Activated B cell treated with CpG ODN at 0.5 μM for 24 hours (primary cell): ENCODE measurements at regions of chr9 and their contacts with region 1.

Region 1: GRCh38 chr9:6779417-6780241 is 21.9 kb downstream of the KDM4C start:
- DNase-seq: no peak
- ATAC-seq: peak; percentile 29
- H3K4me3 Mint-ChIP-seq: peak overlapping the region; percentile 44
- H3K27ac Mint-ChIP-seq: peak overlapping the region; percentile 63
- H3K4me1 Mint-ChIP-seq: peaks cover 94% of the 10 kb centered on the region
- H3K27me3 Mint-ChIP-seq: no peaks in the 10 kb centered on the region
- CTCF ChIP-seq: no peak

Region 2: DNA sequence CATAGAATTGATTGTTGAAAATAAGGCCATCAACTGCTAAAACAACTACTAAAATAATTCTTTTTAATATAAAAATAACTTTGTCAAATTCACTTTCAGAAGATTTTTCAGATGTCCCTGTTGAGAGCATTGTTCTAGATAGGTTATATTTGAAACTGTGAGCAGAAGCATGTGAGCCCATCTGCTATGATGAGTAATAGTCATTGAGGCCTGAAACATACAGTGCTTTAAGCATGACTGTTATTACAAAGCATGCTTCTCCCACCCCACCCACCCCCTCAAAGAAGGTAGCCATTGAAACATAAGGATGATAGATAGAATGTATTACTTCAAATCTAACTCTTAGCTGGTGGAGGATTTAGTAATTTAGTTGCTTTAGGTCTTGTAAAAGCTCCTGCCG is 280.6 kb before region 1 on chr9:
- CTCF ChIA-PET with region 1: no interaction called
- POLR2A ChIA-PET with region 1: no interaction called
- intact Hi-C with region 1: no loop called
- DNase-seq: no peak
- ATAC-seq: peak; percentile 37
- H3K4me3 Mint-ChIP-seq: no peak overlapping the region
- H3K27ac Mint-ChIP-seq: no peak overlapping the region
- H3K4me1 Mint-ChIP-seq: no peaks in the 10 kb centered on the region
- H3K27me3 Mint-ChIP-seq: no peaks in the 10 kb centered on the region
- CTCF ChIP-seq: no peak

Region 3: GRCh38 chr9:6764523-6764922 is 15.1 kb before region 1 on chr9:
- CTCF ChIA-PET with region 1: interaction called, 3 read pairs
- POLR2A ChIA-PET with region 1: interaction called, 49 read pairs
- intact Hi-C with region 1: loop called (anchors 2 kb)
- DNase-seq: no peak
- ATAC-seq: no peak
- H3K4me3 Mint-ChIP-seq: peak overlapping the region; percentile 1
- H3K27ac Mint-ChIP-seq: peak overlapping the region; percentile 3
- H3K4me1 Mint-ChIP-seq: peaks cover 80% of the 10 kb centered on the region
- H3K27me3 Mint-ChIP-seq: no peaks in the 10 kb centered on the region
- CTCF ChIP-seq: no peak

Region 4: DNA sequence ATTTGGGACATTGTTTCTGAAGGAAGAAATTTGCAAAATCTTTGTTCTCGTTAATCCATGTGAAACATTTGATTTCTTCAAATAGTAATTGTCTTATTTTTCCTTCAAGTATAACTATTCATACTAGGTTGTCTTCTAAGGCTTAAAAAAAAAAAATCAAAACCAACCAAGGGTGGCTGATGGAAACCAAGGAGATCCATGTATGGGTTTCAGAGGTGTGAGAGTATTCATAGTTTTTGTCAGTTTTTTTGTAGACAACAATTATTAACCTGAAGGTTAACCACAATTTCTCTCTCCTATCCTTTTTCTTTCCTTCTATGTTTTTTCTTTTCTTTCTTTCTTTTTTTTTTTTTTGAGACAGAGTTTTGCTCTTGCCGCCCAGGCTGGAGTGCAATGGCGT is 13.6 kb after region 1 on chr9:
- CTCF ChIA-PET with region 1: no interaction called
- POLR2A ChIA-PET with region 1: interaction called, 3 read pairs
- intact Hi-C with region 1: loop called (anchors 2 kb)
- DNase-seq: no peak
- ATAC-seq: no peak
- H3K4me3 Mint-ChIP-seq: no peak overlapping the region
- H3K27ac Mint-ChIP-seq: no peak overlapping the region
- H3K4me1 Mint-ChIP-seq: peaks cover 22% of the 10 kb centered on the region
- H3K27me3 Mint-ChIP-seq: no peaks in the 10 kb centered on the region
- CTCF ChIP-seq: no peak

Region 5: DNA sequence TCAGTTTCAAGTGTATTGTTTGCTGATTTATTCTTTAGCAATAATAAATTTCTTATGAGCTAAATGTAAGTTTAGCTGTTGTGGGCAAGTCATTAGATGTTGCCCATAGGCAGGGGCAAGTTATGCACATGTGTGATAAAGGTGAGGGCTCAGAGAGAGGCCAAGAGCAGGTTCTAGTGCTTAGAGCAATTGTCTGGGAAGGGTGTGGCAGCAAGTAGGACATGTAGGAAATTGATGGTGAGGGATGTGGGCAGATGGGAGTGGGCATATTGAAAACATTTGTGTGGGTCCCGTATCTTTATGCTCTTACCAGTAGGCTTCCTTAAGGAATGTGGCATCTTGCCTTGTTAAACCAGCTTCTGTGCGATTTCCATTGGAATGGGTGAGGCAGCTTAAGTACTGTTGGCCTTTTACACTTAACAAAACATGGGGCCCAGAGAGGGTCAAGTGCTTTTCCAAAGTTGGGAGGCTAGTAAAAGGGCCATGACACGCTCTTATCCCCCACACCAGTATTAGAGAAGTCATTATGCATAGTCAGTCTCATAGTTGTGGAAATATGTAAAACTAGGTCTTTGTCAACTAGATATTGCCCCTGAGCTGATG is 38.8 kb after region 1 on chr9:
- CTCF ChIA-PET with region 1: no interaction called
- POLR2A ChIA-PET with region 1: no interaction called
- intact Hi-C with region 1: loop called (anchors 5 kb)
- DNase-seq: no peak
- ATAC-seq: no peak
- H3K4me3 Mint-ChIP-seq: no peak overlapping the region
- H3K27ac Mint-ChIP-seq: peak overlapping the region; percentile 39
- H3K4me1 Mint-ChIP-seq: peaks cover 49% of the 10 kb centered on the region
- H3K27me3 Mint-ChIP-seq: no peaks in the 10 kb centered on the region
- CTCF ChIP-seq: no peak

Region 6: GRCh38 chr9:6997330-6997729 is 217.7 kb after region 1 on chr9:
- CTCF ChIA-PET with region 1: no interaction called
- POLR2A ChIA-PET with region 1: no interaction called
- intact Hi-C with region 1: no loop called
- DNase-seq: no peak
- ATAC-seq: no peak
- H3K4me3 Mint-ChIP-seq: no peak overlapping the region
- H3K27ac Mint-ChIP-seq: no peak overlapping the region
- H3K4me1 Mint-ChIP-seq: peaks cover 2% of the 10 kb centered on the region
- H3K27me3 Mint-ChIP-seq: no peaks in the 10 kb centered on the region
- CTCF ChIP-seq: no peak